Sigmoid colon (tissue), 7 donors: ENCODE measurements at regions of chr11 and their contacts with region 1.

Region 1: GRCh38 chr11:75714211-75714610 is 3.4 kb upstream of the MOGAT2 start:
- DNase-seq: no peak
- H3K4me3 ChIP-seq: no peak overlapping the region
- H3K27ac ChIP-seq: no peak overlapping the region
- H3K4me1 ChIP-seq: no peaks in the 10 kb centered on the region
- H3K27me3 ChIP-seq: no peaks in the 10 kb centered on the region
- CTCF ChIP-seq: no peak
- EP300 ChIP-seq: no peak
- POLR2A ChIP-seq: no peak

Region 2: GRCh38 chr11:75757651-75758050 is 43.4 kb after region 1 on chr11:
- intact Hi-C with region 1: no loop called
- DNase-seq: no peak
- H3K4me3 ChIP-seq: no peak overlapping the region
- H3K27ac ChIP-seq: no peak overlapping the region
- H3K4me1 ChIP-seq: no peaks in the 10 kb centered on the region
- H3K27me3 ChIP-seq: no peaks in the 10 kb centered on the region
- CTCF ChIP-seq: no peak
- EP300 ChIP-seq: no peak
- POLR2A ChIP-seq: no peak

Region 3: GRCh38 chr11:75768112-75768908 is 54.1 kb after region 1 on chr11 and contains the start of gene DGAT2:
- intact Hi-C with region 1: loop called (anchors 5 kb)
- DNase-seq: peak; percentile 76
- H3K4me3 ChIP-seq: peak within 1 kb of the TSS; percentile 25 to 54 (median 48)
- H3K27ac ChIP-seq: peak within 1 kb of the TSS in 1 of 4 donors; percentile 29
- H3K4me1 ChIP-seq: peaks cover 0 to 20% (median 19%) of the 10 kb centered on the region in 4 donors
- H3K27me3 ChIP-seq: peaks cover 0 to 3% (median 0%) of the 10 kb centered on the region in 3 donors
- CTCF ChIP-seq: no peak
- EP300 ChIP-seq: no peak
- POLR2A ChIP-seq: no peak
- total RNA-seq, gene DGAT2: 0.55 to 20.3 (median 0.92) TPM